OCI-LY7 (cell line): ENCODE measurements at regions of chr1 and their contacts with region 1.

Region 1: DNA sequence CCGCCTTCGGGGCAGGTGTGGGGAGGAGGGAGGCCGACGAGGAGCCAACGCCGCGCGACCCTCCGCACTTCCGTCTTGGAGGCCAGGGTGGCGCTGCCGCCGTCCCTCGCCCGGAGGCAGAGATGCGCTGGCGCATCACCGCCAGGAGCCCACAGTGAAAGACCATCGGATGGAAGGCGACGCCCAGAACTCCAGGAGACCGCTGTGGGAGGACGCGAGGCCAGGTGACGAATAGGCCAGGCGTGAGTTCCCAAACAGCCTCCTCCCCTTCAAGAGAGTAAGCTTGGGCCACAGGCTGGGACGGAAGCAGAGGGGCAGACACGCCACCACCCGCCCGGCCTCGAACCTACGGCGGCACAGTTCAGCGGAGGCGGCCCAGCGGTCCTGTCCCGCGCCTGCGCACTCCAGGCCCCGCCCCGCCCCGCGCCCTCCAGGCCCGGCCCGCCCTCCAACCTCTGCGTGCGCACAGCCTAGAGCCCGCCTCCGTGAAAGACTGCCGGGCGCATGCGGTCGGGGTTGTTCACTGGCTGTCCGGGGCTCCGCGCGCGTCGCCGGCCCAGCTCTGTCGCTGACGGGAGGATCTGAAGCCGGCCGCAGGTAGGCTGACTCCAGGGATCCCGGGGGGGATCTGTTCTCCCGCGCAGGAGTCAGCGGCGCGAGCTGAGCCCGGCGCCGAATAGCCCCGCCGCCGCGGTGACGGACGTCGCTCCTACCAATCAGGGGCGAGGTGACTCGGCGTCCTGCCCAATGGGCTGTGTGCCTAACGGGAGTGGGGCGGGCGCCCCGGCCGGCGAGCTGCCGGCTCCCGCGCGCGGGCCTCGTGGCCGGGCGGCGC is at the start of gene CTPS1:
- DNase-seq: peak; percentile 95
- H3K4me3 ChIP-seq: peak within 1 kb of the TSS; percentile 100
- H3K27ac ChIP-seq: peak within 1 kb of the TSS; percentile 79
- H3K4me1 ChIP-seq: peaks cover 25% of the 10 kb centered on the region
- CTCF ChIP-seq: peak; percentile 70
- total RNA-seq, gene CTPS1: 58.9 and 76.6 TPM in 2 replicates

Region 2: GRCh38 chr1:41003640-41004220 is 24.3 kb after region 1 on chr1:
- CTCF ChIA-PET with region 1: no interaction called
- POLR2A ChIA-PET with region 1: interaction called, 3 read pairs
- intact Hi-C with region 1: loop called (anchors 2 kb)
- DNase-seq: peak; percentile 48
- H3K4me3 ChIP-seq: no peak overlapping the region
- H3K27ac ChIP-seq: no peak overlapping the region
- H3K4me1 ChIP-seq: no peaks in the 10 kb centered on the region
- CTCF ChIP-seq: peak; percentile 60

Region 3: GRCh38 chr1:42035830-42036604 is 1056.6 kb after region 1 on chr1:
- CTCF ChIA-PET with region 1: no interaction called
- POLR2A ChIA-PET with region 1: no interaction called
- intact Hi-C with region 1: loop called (anchors 5 kb)
- DNase-seq: peak; percentile 95
- H3K4me3 ChIP-seq: peak overlapping the region; percentile 84
- H3K27ac ChIP-seq: no peak overlapping the region
- H3K4me1 ChIP-seq: peaks cover 14% of the 10 kb centered on the region
- CTCF ChIP-seq: no peak